ENCODE measurements at regions of chr1 and their contacts with region 1.

Region 1: GRCh38 chr1:177256153-177257075 is 85.7 kb downstream of the BRINP2 start:
- DNase-seq: peak; percentile 64
- ATAC-seq: peak; percentile 91

Region 2: DNA sequence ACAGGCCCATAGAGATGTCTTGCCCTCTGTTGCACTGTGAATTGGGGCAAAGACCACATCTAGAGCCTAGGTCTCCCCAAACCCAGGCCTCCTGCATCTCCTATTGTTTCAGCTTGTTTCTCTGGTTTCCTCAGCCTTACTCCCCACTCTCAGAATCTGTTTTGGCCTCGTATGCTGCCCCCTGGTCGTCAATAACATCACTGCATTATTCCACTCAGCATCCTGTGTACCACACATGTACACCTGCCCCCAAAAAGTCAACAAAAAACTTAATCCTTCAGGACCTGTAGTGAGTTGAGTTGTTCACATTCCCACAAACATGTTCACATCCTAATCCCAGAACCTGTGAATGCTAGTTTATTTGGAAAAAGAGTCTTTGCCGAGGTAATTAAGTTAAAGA is 99.2 kb after region 1 on chr1:
- intact Hi-C with region 1: no loop called
- DNase-seq: no peak
- ATAC-seq: peak; percentile 55

Region 3: GRCh38 chr1:177780096-177780700 is 523.8 kb after region 1 on chr1:
- intact Hi-C with region 1: loop called (anchors 5 kb)
- DNase-seq: no peak
- ATAC-seq: peak; percentile 68

Region 4: GRCh38 chr1:177948336-177948972 is 692.0 kb after region 1 on chr1:
- intact Hi-C with region 1: loop called (anchors 10 kb)
- DNase-seq: no peak
- ATAC-seq: peak; percentile 70